Mammary epithelial cell (primary cell): ENCODE measurements at regions of chr9 and their contacts with region 1.

Region 1: DNA sequence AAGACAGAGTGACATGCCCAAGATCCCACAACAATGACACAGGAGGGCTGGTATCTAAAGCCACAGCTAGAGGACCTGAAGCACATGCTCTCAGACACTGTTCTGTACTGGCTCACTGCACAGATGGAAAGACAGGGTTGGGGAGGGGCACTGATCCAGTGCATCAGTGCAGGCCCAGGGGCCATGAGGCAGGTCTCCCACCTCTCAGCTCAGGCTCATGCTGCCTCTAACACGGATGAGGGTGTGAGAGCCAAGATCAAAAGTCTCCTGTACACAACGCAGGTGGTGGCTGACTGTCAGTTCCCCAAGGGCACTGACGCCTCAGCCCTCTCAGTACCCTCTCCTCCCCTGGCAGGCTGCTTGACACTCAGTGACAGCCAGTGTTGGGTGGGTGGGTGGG is 10.9 kb downstream of the RAPGEF1 start:
- DNase-seq: no peak
- H3K4me3 ChIP-seq: no peak overlapping the region
- H3K27ac ChIP-seq: peak overlapping the region; percentile 80
- H3K4me1 ChIP-seq: peaks cover 65% of the 10 kb centered on the region
- H3K27me3 ChIP-seq: no peaks in the 10 kb centered on the region
- CTCF ChIP-seq: no peak

Region 2: GRCh38 chr9:131478421-131478868 is 250.5 kb before region 1 on chr9:
- CTCF ChIA-PET with region 1: no interaction called
- dilution Hi-C with region 1: no loop called
- in situ Hi-C with region 1: no loop called
- intact Hi-C with region 1: no loop called
- DNase-seq: no peak
- H3K4me3 ChIP-seq: no peak overlapping the region
- H3K27ac ChIP-seq: no peak overlapping the region
- H3K4me1 ChIP-seq: no peaks in the 10 kb centered on the region
- H3K27me3 ChIP-seq: no peaks in the 10 kb centered on the region
- CTCF ChIP-seq: peak; percentile 45 to 55

Region 3: DNA sequence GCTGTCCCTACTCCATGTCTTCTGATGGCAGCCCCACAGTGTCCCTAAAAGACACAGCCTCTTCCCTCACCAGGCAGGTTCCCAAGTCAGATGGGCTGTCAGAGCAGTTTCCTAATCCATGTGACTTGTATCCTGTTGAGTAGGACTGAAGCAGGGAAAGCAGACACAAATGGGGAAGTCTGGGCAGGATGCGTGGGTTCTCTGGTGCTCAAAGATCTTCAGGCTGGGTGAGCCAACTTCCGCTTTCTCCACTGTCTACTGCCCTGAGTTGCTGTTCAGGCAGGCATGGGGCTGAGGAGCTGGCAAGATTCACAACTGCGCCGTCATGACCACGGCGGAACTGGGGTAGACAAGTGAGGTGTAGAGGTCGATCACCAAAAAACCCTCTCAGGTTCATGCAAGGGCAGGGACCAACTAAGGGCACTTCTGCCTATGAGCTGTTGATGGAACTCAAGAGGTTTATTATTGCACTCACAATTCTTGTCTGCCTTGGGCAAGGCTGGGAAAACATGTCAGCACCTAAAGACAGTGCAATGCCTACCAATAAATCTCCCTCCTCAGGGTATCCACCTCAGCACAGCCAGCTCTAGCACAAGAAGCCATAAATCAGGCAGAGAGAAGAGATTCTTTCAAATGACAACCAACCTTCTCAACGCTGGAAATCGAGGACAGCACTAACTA is 72.5 kb before region 1 on chr9:
- CTCF ChIA-PET with region 1: no interaction called
- dilution Hi-C with region 1: no loop called
- in situ Hi-C with region 1: loop called in 1 of 2 experiments (anchors 10 kb)
- intact Hi-C with region 1: loop called (anchors 5 kb)
- DNase-seq: no peak
- H3K4me3 ChIP-seq: no peak overlapping the region
- H3K27ac ChIP-seq: peak overlapping the region; percentile 45
- H3K4me1 ChIP-seq: peaks cover 49% of the 10 kb centered on the region
- H3K27me3 ChIP-seq: no peaks in the 10 kb centered on the region
- CTCF ChIP-seq: no peak

Region 4: DNA sequence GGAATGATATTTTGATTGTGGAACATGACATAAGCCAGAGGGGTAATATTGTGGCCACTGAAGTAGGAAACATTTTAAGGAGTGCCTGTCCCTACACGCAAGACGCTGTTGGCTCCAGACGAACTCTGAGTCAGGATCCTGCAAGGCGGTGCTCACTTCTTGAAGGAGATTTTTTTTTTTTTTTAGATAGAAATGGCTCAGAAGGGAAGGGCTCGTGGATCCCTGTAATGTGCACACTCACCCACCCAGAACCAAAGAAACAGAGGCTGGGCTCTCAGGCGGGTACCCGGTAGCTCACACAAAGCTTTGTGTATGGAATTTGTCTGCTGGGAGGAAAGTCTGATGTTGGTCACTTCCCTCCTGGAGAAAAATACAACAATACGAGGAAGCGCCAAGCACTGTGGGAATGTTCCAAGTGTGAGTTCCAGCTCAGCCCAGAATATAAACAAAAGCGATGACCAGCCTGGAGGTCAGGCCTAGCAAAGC is 14.8 kb before region 1 on chr9:
- CTCF ChIA-PET with region 1: interaction called, 12 read pairs
- dilution Hi-C with region 1: no loop called
- in situ Hi-C with region 1: no loop called
- intact Hi-C with region 1: loop called (anchors 1 kb)
- DNase-seq: peak; percentile 93
- H3K4me3 ChIP-seq: peak overlapping the region in 2 of 3 experiments; percentile 4 to 34
- H3K27ac ChIP-seq: peak overlapping the region; percentile 97
- H3K4me1 ChIP-seq: peaks cover 35% of the 10 kb centered on the region
- H3K27me3 ChIP-seq: no peaks in the 10 kb centered on the region
- CTCF ChIP-seq: no peak